PC-9 (cell line): ENCODE measurements at regions of chr2 and their contacts with region 1.

Region 1: DNA sequence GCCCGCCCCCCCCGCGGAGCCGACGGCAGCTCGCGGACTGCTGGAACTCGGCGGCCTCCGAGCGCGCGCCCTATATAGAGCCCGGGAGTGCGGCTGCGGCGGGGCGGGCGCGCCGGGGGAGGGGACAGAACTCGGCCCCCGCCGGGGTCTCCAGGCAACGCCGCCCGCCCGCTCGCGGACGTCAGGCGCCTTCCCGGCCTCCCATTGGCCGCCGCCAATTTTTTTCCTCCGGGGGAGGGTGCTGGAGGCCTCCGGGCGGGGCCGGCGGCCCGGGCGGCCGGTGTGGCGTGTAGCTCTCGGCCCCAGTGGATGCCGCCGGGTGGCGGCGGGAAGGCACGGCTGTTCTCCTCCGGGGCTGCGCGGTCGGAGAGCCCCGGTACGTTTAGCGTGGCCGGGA is at the start of gene ZFP36L2:
- DNase-seq: peak; percentile 88 to 99
- H3K4me3 ChIP-seq: peak within 1 kb of the TSS; percentile 72
- H3K27ac ChIP-seq: peak within 1 kb of the TSS; percentile 92
- H3K4me1 ChIP-seq: peaks cover 34% of the 10 kb centered on the region
- H3K27me3 ChIP-seq: no peaks in the 10 kb centered on the region
- CTCF ChIP-seq: no peak
- total RNA-seq, gene ZFP36L2: 31.3 and 34.3 TPM in 2 replicates

Region 2: DNA sequence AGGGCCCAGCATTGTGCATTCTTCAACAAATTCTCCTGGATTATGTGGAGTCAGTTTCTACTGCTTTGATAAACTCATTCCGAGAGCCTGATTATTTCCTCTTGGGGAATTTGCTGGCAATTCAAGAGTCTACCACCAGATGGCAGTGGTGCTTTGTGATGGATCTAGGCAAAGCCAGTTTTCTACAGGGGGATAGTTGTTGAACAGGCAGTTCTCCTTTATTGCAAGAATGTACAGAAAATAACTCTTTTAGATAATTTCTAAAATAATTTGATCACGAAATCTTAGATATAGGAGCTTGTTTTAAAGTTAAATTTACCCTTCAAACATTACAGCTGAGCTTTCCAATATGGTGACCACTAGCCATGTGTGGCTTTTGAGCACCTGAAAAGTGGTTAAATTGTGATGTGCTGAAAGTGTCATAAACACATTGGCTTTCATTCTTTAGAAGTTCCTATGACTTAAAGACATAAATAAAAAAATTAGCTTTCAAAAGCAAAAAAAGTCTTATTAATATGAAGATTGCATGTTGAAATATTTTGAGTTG is 367.5 kb before region 1 on chr2:
- CTCF ChIA-PET with region 1: interaction called, 7 read pairs
- POLR2A ChIA-PET with region 1: no interaction called
- intact Hi-C with region 1: loop called (anchors 1 kb)
- DNase-seq: peak; percentile 64 to 65
- H3K4me3 ChIP-seq: no peak overlapping the region
- H3K27ac ChIP-seq: no peak overlapping the region
- H3K4me1 ChIP-seq: no peaks in the 10 kb centered on the region
- H3K27me3 ChIP-seq: no peaks in the 10 kb centered on the region
- CTCF ChIP-seq: peak; percentile 99

Region 3: GRCh38 chr2:43010438-43011157 is 216.0 kb before region 1 on chr2:
- CTCF ChIA-PET with region 1: no interaction called
- POLR2A ChIA-PET with region 1: interaction called, 19 read pairs
- intact Hi-C with region 1: no loop called
- DNase-seq: peak; percentile 64 to 96
- H3K4me3 ChIP-seq: peak overlapping the region; percentile 7; the same call in 1 of the 2 replicates
- H3K27ac ChIP-seq: peak overlapping the region; percentile 66
- H3K4me1 ChIP-seq: peaks cover 29% of the 10 kb centered on the region
- H3K27me3 ChIP-seq: no peaks in the 10 kb centered on the region
- CTCF ChIP-seq: no peak

Region 4: GRCh38 chr2:43070039-43070438 is 156.5 kb before region 1 on chr2:
- CTCF ChIA-PET with region 1: no interaction called
- POLR2A ChIA-PET with region 1: interaction called, 3 read pairs
- intact Hi-C with region 1: loop called (anchors 1 kb)
- DNase-seq: peak; percentile 94 to 98
- H3K4me3 ChIP-seq: no peak overlapping the region
- H3K27ac ChIP-seq: peak overlapping the region; percentile 93
- H3K4me1 ChIP-seq: peaks cover 84% of the 10 kb centered on the region
- H3K27me3 ChIP-seq: no peaks in the 10 kb centered on the region
- CTCF ChIP-seq: no peak; the same call in 1 of the 2 replicates

Region 5: GRCh38 chr2:43178602-43179542 is 47.7 kb before region 1 on chr2:
- CTCF ChIA-PET with region 1: interaction called, 4 read pairs
- POLR2A ChIA-PET with region 1: interaction called, 6 read pairs
- intact Hi-C with region 1: loop called (anchors 2 kb)
- DNase-seq: peak; percentile 90 to 91
- H3K4me3 ChIP-seq: peak overlapping the region; percentile 33; the same call in 1 of the 2 replicates
- H3K27ac ChIP-seq: peak overlapping the region; percentile 88
- H3K4me1 ChIP-seq: peaks cover 95% of the 10 kb centered on the region
- H3K27me3 ChIP-seq: no peaks in the 10 kb centered on the region
- CTCF ChIP-seq: no peak

Region 6: GRCh38 chr2:43484323-43484930 is 257.9 kb after region 1 on chr2:
- CTCF ChIA-PET with region 1: interaction called, 11 read pairs
- POLR2A ChIA-PET with region 1: interaction called, 4 read pairs
- intact Hi-C with region 1: loop called (anchors 1 kb)
- DNase-seq: peak in 1 of 2 experiments; percentile 78
- H3K4me3 ChIP-seq: no peak overlapping the region
- H3K27ac ChIP-seq: no peak overlapping the region; the same call in 1 of the 2 replicates
- H3K4me1 ChIP-seq: peaks cover 13% of the 10 kb centered on the region
- H3K27me3 ChIP-seq: no peaks in the 10 kb centered on the region
- CTCF ChIP-seq: peak; percentile 93

Region 7: GRCh38 chr2:45220227-45220626 is 1993.7 kb after region 1 on chr2:
- CTCF ChIA-PET with region 1: no interaction called
- POLR2A ChIA-PET with region 1: no interaction called
- intact Hi-C with region 1: no loop called
- DNase-seq: peak; percentile 24 to 47
- H3K4me3 ChIP-seq: no peak overlapping the region
- H3K27ac ChIP-seq: no peak overlapping the region
- H3K4me1 ChIP-seq: peaks cover 30% of the 10 kb centered on the region
- H3K27me3 ChIP-seq: no peaks in the 10 kb centered on the region
- CTCF ChIP-seq: no peak